ENCODE measurements at regions of chr3 and their contacts with region 1.

Region 1: GRCh38 chr3:132638721-132639120 is 20.9 kb downstream of the ACAD11 start:
- DNase-seq: no peak
- H3K4me3 ChIP-seq: no peak overlapping the region
- H3K27ac ChIP-seq: no peak overlapping the region
- H3K4me1 ChIP-seq: peaks cover 9% of the 10 kb centered on the region
- H3K27me3 ChIP-seq: no peaks in the 10 kb centered on the region
- CTCF ChIP-seq: no peak

Region 2: DNA sequence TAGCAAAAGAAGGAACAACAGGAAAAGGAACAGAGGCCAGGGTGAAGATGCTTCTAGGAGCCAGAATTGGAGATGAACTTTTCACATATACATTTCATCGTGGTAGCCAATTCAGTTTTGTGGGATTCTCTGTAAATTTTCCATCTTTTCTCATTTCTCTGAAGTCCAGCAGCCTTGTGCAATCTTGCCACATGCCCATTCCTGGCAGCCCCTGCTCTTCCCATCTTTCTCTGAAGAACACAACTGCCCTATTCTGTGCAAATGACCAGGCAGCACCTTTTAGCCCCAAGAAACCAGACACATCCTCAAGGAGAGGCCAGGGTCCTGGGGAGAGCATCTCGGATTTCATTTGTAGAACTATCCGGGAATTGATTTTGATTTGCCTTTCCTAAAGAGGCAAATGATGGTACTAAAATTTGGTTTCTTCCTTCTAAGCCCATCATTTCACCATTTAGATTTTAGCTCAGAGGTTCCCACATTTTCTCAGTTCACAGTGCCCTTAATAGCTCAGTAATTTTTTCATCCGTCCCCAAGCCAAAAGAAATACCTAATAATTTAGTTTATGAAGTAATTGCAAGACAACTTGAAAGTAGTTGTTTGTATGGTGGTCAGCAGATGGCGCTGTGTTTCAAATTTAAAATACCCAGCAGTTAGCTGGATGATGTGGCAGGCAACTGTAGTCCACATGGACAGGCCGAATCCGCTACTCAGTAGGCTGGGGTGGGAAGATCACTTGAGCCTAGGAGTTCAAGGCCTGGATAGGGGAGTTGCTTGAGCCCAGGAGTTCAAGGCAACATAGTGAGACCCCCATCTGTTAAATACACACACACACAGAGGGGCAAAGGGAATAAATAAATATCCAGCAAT is 102.9 kb before region 1 on chr3:
- intact Hi-C with region 1: loop called (anchors 2 kb)
- DNase-seq: peak; percentile 24
- H3K4me3 ChIP-seq: no peak overlapping the region
- H3K27ac ChIP-seq: no peak overlapping the region
- H3K4me1 ChIP-seq: peaks cover 6% of the 10 kb centered on the region
- H3K27me3 ChIP-seq: no peaks in the 10 kb centered on the region
- CTCF ChIP-seq: peak; percentile 76

Region 3: DNA sequence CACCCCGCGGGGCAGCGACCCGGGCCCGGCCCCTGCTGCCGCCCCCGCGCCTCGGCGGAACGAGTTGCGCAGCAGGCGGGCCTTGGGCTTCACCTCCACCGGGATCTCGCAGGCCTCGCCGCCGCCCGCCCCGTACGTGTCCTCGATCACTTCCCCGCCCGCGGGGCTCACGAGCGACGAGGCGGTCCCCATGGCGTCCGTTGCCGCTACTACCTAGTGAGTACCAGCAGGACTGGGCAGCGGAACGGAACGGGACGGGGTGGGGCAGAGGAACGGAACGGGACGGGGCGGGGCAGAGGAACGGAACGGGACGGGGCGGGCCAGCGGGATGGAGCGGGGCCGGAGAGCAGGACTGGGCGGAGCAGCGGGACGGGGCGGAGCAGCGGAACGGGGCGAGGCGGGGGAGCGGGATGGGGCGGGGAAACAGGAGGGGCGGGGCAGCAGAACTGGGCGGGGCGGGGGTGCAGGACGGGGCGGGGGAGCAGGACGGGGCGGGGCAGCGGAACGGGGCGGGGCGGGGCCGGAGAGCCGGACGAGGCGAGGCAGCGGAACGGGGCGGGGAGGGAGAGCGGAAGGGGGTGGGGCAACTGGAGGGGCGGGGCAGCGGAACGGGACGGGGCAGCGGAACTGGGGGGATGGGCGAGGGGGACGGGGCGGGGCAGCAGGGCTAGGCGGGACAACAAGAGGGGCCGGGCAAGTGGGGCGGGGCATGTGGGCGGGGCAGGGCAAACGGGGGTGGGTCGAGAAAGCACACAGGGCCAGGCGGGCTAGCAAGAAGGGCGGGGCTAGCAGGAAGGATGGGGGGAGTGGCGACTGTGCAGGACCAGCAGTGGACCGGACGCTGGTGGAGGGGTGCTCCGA is 83.7 kb after region 1 on chr3 and contains the start of gene NPHP3:
- intact Hi-C with region 1: no loop called
- DNase-seq: peak; percentile 98
- H3K4me3 ChIP-seq: peak within 1 kb of the TSS; percentile 95
- H3K27ac ChIP-seq: peak within 1 kb of the TSS; percentile 99
- H3K4me1 ChIP-seq: peaks cover 54% of the 10 kb centered on the region
- H3K27me3 ChIP-seq: no peaks in the 10 kb centered on the region
- CTCF ChIP-seq: peak; percentile 23
- total RNA-seq, gene NPHP3: 10.1 TPM

Region 4: GRCh38 chr3:132907293-132907692 is 268.6 kb after region 1 on chr3:
- intact Hi-C with region 1: no loop called
- DNase-seq: no peak
- H3K4me3 ChIP-seq: no peak overlapping the region
- H3K27ac ChIP-seq: no peak overlapping the region
- H3K4me1 ChIP-seq: no peaks in the 10 kb centered on the region
- H3K27me3 ChIP-seq: no peaks in the 10 kb centered on the region
- CTCF ChIP-seq: no peak

Region 5: GRCh38 chr3:132961991-132962390 is 323.3 kb after region 1 on chr3:
- intact Hi-C with region 1: no loop called
- DNase-seq: no peak
- H3K4me3 ChIP-seq: no peak overlapping the region
- H3K27ac ChIP-seq: no peak overlapping the region
- H3K4me1 ChIP-seq: no peaks in the 10 kb centered on the region
- H3K27me3 ChIP-seq: peaks cover 7% of the 10 kb centered on the region
- CTCF ChIP-seq: no peak

Measured in left ventricle myocardium inferior (tissue), 1 donor.